Sigmoid colon (tissue), 7 donors: ENCODE measurements at regions of chr22 and their contacts with region 1.

Region 1: DNA sequence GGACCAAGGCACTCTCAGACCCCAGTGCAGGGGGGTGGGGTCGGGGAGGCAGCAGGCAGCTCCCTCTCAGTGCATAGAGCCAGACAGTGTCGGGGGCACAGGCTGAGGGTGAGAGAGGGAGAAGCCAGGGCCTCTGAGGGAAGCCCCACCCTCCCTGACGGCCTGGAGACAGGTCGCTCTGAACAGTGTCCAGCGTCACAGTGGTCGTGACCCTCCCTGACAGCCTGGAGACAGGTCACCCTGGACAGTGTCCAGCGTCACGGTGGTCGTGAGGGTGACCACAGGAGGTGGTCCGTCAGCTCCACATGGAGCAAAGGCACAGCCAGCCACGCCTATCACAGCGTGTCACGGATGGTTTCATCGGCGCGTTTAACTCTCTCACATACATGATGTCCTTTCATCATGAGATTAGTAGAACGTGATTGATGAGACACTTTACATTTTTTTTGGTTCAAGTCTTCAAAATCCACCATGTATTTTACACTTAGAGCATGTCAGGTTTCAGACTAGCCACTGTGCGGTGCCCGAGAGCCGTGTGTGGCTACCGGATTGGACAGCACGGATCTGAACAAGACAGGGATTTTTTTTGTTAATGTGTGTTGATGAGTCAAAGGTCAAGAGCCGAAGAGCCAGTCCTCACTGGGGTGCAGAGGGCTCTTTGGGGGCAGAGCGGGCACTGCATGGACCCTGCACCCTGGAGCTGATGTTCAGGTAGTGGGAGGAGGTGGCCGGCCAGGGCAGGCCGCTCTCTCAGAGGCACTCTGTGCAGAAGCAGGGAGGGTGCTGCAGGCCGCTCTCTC is 23.9 kb upstream of the PANX2 start:
- DNase-seq: peak; percentile 81
- H3K4me3 ChIP-seq: no peak overlapping the region
- H3K27ac ChIP-seq: no peak overlapping the region
- H3K4me1 ChIP-seq: peaks cover 0 to 6% (median 2%) of the 10 kb centered on the region in 4 donors
- H3K27me3 ChIP-seq: no peaks in the 10 kb centered on the region
- CTCF ChIP-seq: peak; percentile 75 to 82 (median 78)
- EP300 ChIP-seq: no peak
- POLR2A ChIP-seq: no peak

Region 2: GRCh38 chr22:50074551-50075530 is 71.8 kb before region 1 on chr22:
- intact Hi-C with region 1: no loop called
- DNase-seq: no peak
- H3K4me3 ChIP-seq: no peak overlapping the region
- H3K27ac ChIP-seq: no peak overlapping the region
- H3K4me1 ChIP-seq: no peaks in the 10 kb centered on the region
- H3K27me3 ChIP-seq: peaks cover 0 to 3% (median 0%) of the 10 kb centered on the region in 3 donors
- CTCF ChIP-seq: no peak
- EP300 ChIP-seq: no peak
- POLR2A ChIP-seq: no peak

Region 3: GRCh38 chr22:50136581-50137015 is 10.0 kb before region 1 on chr22:
- intact Hi-C with region 1: no loop called
- DNase-seq: no peak
- H3K4me3 ChIP-seq: no peak overlapping the region
- H3K27ac ChIP-seq: peak overlapping the region in 1 of 4 donors; percentile 28
- H3K4me1 ChIP-seq: peaks cover 0 to 13% (median 11%) of the 10 kb centered on the region in 4 donors
- H3K27me3 ChIP-seq: no peaks in the 10 kb centered on the region
- CTCF ChIP-seq: no peak
- EP300 ChIP-seq: no peak
- POLR2A ChIP-seq: no peak

Region 4: GRCh38 chr22:50209893-50210292 is 63.3 kb after region 1 on chr22:
- intact Hi-C with region 1: loop called (anchors 2 kb)
- DNase-seq: peak; percentile 81
- H3K4me3 ChIP-seq: no peak overlapping the region
- H3K27ac ChIP-seq: no peak overlapping the region
- H3K4me1 ChIP-seq: peaks cover 0 to 27% (median 10%) of the 10 kb centered on the region in 4 donors
- H3K27me3 ChIP-seq: no peaks in the 10 kb centered on the region
- CTCF ChIP-seq: peak; percentile 63 to 82 (median 80)
- EP300 ChIP-seq: no peak
- POLR2A ChIP-seq: no peak